Activated CD4-positive, alpha-beta T cell treated with anti-CD3 and anti-CD28 coated beads for 36 hours (primary cell): ENCODE measurements at regions of chr9 and their contacts with region 1.

Region 1: DNA sequence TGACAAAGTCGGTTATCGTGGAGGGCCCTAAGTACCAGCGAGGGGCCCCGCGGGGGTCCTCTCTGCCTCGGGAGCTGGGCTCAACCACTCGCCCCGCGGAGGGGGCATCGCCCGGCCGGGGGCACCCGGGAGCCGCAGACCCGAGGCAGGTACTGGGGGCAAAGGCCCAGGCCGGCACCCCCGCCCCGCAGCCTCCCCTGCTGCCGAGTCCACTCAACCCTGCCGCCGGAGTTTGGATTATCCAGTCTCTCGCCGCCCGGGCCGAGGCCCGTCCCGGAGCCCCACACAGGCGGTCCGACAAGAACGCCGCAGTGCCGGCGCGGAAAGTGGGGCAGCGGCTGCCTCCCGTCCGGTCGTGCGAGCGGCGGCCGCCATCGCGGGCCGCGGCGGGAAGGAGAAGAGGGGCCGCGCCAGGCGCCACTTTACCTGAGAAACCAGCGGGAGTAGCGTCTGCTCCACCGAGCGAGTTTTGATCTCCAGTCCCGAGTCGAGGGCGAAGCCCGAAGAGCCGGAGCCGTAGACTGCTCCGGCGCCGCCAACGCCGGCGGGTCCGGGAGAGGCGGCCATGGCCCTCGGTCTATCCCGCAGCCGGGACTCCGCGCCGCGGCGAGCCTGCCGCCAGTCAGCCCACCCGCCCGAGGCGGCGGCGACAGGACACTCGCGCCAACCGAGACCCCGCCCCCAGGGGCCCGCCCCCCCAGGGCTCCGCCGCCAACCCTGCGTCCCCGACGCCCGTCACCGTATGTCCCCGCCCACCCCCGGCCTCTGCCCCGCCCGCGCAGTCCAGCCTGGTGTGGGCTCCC is at the start of gene CTNNAL1:
- DNase-seq: peak; percentile 91
- ATAC-seq: peak; percentile 79
- H3K4me3 Mint-ChIP-seq: peak within 1 kb of the TSS; percentile 87
- H3K27ac Mint-ChIP-seq: peak within 1 kb of the TSS; percentile 82
- H3K4me1 Mint-ChIP-seq: peaks cover 32% of the 10 kb centered on the region
- H3K27me3 Mint-ChIP-seq: no peaks in the 10 kb centered on the region
- total RNA-seq, gene CTNNAL1: 13.0 to 16.4 TPM

Region 2: GRCh38 chr9:107282753-107283625 is 1730.1 kb before region 1 on chr9 and contains the start of gene RAD23B:
- CTCF ChIA-PET with region 1: no interaction called
- POLR2A ChIA-PET with region 1: no interaction called
- intact Hi-C with region 1: loop called in 1 of 2 experiments (anchors 1 kb)
- DNase-seq: peak; percentile 99
- ATAC-seq: peak; percentile 85
- H3K4me3 Mint-ChIP-seq: peak within 1 kb of the TSS; percentile 83
- H3K27ac Mint-ChIP-seq: peak within 1 kb of the TSS; percentile 89
- H3K4me1 Mint-ChIP-seq: peaks cover 37% of the 10 kb centered on the region
- H3K27me3 Mint-ChIP-seq: no peaks in the 10 kb centered on the region
- total RNA-seq, gene RAD23B: 114 to 188 TPM

Region 3: DNA sequence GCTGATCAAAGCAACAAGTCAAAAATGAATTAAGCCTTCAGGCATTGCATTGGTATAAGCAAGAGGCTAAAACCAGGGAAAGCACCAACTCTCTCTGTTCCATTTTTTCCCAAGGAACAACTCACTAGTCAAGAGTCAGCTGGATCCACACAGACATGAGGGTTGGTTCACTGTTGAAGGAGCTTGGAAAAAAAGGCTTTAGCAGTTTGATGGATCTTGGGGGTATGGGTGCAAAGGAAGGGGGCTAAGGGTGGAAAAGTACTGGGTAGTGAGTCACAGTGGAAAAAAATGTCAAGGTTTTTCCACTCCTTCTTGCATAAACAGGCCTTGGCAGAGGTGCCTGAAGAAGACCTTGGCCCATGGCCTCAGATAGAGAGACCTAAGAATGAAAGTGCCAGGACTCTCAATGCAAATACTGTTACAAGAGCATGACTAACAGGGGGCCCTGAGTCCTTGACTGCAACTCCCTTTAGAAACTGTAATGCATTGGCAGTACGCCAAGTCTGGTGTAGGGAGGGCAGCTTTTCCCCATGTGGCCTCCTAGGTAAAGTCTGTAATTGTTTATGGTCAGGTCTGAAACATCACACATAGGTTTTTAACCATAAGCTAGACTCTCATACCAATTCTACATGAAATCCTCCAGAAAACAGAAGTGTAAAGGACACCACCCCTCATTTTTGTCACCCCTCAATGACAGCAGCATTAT is 127.3 kb before region 1 on chr9:
- CTCF ChIA-PET with region 1: no interaction called
- POLR2A ChIA-PET with region 1: no interaction called
- intact Hi-C with region 1: loop called in 1 of 2 experiments (anchors 1 kb)
- DNase-seq: peak; percentile 81
- ATAC-seq: peak; percentile 100
- H3K4me3 Mint-ChIP-seq: peak overlapping the region; percentile 50
- H3K27ac Mint-ChIP-seq: peak overlapping the region; percentile 77
- H3K4me1 Mint-ChIP-seq: peaks cover 20% of the 10 kb centered on the region
- H3K27me3 Mint-ChIP-seq: no peaks in the 10 kb centered on the region

Region 4: GRCh38 chr9:109098171-109098959 is 85.3 kb after region 1 on chr9:
- CTCF ChIA-PET with region 1: no interaction called
- POLR2A ChIA-PET with region 1: no interaction called
- intact Hi-C with region 1: loop called in 1 of 2 experiments (anchors 5 kb)
- DNase-seq: no peak
- ATAC-seq: no peak
- H3K4me3 Mint-ChIP-seq: no peak overlapping the region
- H3K27ac Mint-ChIP-seq: peak overlapping the region; percentile 89
- H3K4me1 Mint-ChIP-seq: peaks cover 92% of the 10 kb centered on the region
- H3K27me3 Mint-ChIP-seq: no peaks in the 10 kb centered on the region

Region 5: DNA sequence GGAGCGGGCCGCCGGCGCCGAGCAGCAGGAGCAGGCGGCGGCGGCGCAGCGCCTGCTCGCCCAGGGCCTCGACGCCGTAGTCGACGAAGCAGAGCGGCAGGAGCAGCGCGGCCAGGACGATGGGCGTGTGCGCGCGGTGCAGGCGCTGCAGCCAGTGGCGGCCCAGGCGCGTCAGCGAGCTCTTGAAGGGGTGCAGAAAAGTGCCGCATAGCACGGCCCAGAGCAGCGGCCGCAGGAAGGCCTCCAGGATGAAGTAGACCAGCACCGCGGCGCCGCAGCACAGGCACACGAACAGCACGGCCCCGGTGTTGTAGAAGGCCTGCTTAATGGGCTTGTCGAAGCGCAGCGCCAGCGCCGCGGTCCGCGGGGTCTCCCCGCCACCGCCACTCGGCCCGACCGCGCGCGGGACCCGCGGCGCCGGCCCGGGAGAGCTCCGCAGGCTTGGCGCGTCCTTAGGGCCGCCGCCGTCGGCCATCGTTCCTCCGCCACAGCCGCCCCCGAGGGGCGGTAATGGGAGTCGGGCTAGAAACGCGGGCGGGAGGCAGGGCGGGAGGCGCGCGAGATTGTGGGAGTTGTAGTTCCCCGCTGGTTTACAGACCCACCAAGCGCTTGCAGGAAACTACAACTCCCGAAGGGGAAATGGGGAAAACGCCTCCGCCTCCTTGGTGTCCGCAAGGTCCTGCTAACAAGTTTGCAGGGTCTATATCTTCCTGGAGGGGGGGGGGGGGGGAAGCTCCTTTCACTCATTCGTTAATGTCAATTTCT is 106.5 kb after region 1 on chr9 and contains the start of gene TMEM245:
- CTCF ChIA-PET with region 1: interaction called, 3 read pairs
- POLR2A ChIA-PET with region 1: no interaction called
- intact Hi-C with region 1: loop called (anchors 1 kb)
- DNase-seq: peak; percentile 97
- ATAC-seq: peak; percentile 91
- H3K4me3 Mint-ChIP-seq: peak within 1 kb of the TSS; percentile 94
- H3K27ac Mint-ChIP-seq: peak within 1 kb of the TSS; percentile 81
- H3K4me1 Mint-ChIP-seq: peaks cover 39% of the 10 kb centered on the region
- H3K27me3 Mint-ChIP-seq: no peaks in the 10 kb centered on the region
- total RNA-seq, gene TMEM245: 24.0 to 24.5 TPM

Region 6: GRCh38 chr9:109320742-109321448 is 307.8 kb after region 1 on chr9 and contains the start of gene EPB41L4B:
- CTCF ChIA-PET with region 1: no interaction called
- POLR2A ChIA-PET with region 1: no interaction called
- intact Hi-C with region 1: loop called in 1 of 2 experiments (anchors 2 kb)
- DNase-seq: peak; percentile 96
- ATAC-seq: peak; percentile 99
- H3K4me3 Mint-ChIP-seq: peak within 1 kb of the TSS; percentile 61
- H3K27ac Mint-ChIP-seq: no peak within 1 kb of the TSS
- H3K4me1 Mint-ChIP-seq: peaks cover 13% of the 10 kb centered on the region
- H3K27me3 Mint-ChIP-seq: peaks cover 45% of the 10 kb centered on the region
- total RNA-seq, gene EPB41L4B: 0.23 to 0.33 TPM

Region 7: DNA sequence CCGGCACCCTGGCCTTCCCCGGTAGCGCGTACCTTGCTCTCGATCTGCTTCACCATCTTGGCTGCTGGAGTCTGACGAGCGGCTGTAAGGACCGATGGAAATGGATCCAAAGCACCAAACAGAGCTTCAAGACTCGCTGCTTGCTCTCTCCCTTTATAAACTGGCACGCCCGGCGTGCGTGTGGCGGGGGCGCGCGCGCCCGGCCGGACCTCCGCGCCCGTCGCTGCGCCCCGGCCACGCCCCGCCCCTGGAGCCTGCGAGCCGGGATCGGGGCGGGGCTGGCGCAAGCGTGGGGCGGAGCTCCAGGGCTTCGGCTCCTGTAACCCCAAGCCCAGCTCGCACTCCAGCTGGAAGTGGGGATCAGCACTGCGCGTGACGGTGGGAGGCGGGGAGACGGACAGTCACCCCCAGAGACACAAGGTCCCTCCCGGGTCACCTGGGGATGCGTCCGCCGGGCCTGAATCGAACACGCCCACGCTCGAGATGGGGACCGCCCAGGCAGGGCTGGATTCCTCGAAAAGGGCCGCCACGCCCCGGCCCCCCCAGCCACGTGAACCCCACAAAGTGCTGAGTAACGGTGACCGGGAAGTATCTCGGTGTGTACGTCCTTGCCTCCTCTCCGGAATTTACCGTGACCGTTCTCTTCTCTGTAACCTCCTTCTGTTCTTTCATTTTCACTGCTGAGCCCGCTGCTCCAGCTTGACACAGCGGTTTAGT is 1243.5 kb after region 1 on chr9 and contains the start of gene TXN:
- CTCF ChIA-PET with region 1: no interaction called
- POLR2A ChIA-PET with region 1: no interaction called
- intact Hi-C with region 1: loop called in 1 of 2 experiments (anchors 5 kb)
- DNase-seq: peak; percentile 94
- ATAC-seq: peak; percentile 77
- H3K4me3 Mint-ChIP-seq: peak within 1 kb of the TSS; percentile 95
- H3K27ac Mint-ChIP-seq: peak within 1 kb of the TSS; percentile 99
- H3K4me1 Mint-ChIP-seq: peaks cover 60% of the 10 kb centered on the region
- H3K27me3 Mint-ChIP-seq: no peaks in the 10 kb centered on the region
- total RNA-seq, gene TXN: 449 to 553 TPM